ENCODE measurements at regions of chr7 and their contacts with region 1.

Region 1: DNA sequence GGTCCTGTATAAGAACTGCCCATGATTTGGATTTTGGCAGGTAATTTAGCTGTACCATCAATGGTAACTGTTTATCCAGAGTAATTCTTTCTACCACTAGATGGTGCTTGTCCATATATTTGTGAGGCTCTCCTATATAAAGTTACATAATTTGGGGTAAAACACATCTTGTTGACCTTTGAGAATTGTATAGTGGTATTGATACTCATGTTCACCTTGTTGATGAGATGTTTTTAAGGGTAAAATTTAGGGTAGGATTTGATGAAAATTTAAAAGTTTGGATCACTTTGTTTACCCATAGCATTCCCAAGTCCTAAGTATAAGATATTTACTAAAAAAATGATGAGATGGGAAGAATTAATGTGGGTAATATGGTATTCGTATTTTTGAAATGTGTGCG is 31.6 kb downstream of the ST7 start:
- DNase-seq: no peak
- ATAC-seq: peak; percentile 30
- H3K4me3 ChIP-seq: no peak overlapping the region
- H3K27ac ChIP-seq: no peak overlapping the region
- H3K4me1 ChIP-seq: no peaks in the 10 kb centered on the region
- H3K27me3 ChIP-seq: no peaks in the 10 kb centered on the region
- CTCF ChIP-seq: peak; percentile 36 to 69 (median 62)
- POLR2A ChIP-seq: no peak

Region 2: GRCh38 chr7:117034851-117035464 is 50.0 kb after region 1 on chr7:
- intact Hi-C with region 1: no loop called
- DNase-seq: no peak
- ATAC-seq: peak; percentile 15
- H3K4me3 ChIP-seq: no peak overlapping the region
- H3K27ac ChIP-seq: no peak overlapping the region
- H3K4me1 ChIP-seq: peaks cover 24% of the 10 kb centered on the region
- H3K27me3 ChIP-seq: no peaks in the 10 kb centered on the region
- CTCF ChIP-seq: no peak
- POLR2A ChIP-seq: no peak

Region 3: GRCh38 chr7:117127585-117128168 is 142.8 kb after region 1 on chr7:
- intact Hi-C with region 1: loop called (anchors 5 kb)
- DNase-seq: peak; percentile 48 to 67 (median 66)
- ATAC-seq: peak; percentile 49
- H3K4me3 ChIP-seq: no peak overlapping the region
- H3K27ac ChIP-seq: no peak overlapping the region
- H3K4me1 ChIP-seq: peaks cover 11% of the 10 kb centered on the region
- H3K27me3 ChIP-seq: no peaks in the 10 kb centered on the region
- CTCF ChIP-seq: peak; percentile 36 to 80 (median 70)
- POLR2A ChIP-seq: no peak